MCF 10A (cell line): ENCODE measurements at regions of chr9 and their contacts with region 1.

Region 1: GRCh38 chr9:20622330-20623020 is at the start of gene MLLT3:
- DNase-seq: peak; percentile 90
- H3K4me3 Mint-ChIP-seq: peak within 1 kb of the TSS; percentile 81
- H3K27ac Mint-ChIP-seq: peak within 1 kb of the TSS; percentile 42
- H3K4me1 Mint-ChIP-seq: peaks cover 20% of the 10 kb centered on the region
- H3K27me3 Mint-ChIP-seq: peaks cover 50% of the 10 kb centered on the region
- CTCF ChIP-seq: no peak
- total RNA-seq, gene MLLT3: 0.66 and 1.2 TPM in 2 replicates

Region 2: GRCh38 chr9:19946441-19947109 is 675.9 kb before region 1 on chr9:
- CTCF ChIA-PET with region 1: no interaction called
- POLR2A ChIA-PET with region 1: no interaction called
- intact Hi-C with region 1: loop called (anchors 5 kb)
- DNase-seq: peak; percentile 11
- H3K4me3 Mint-ChIP-seq: no peak overlapping the region
- H3K27ac Mint-ChIP-seq: no peak overlapping the region
- H3K4me1 Mint-ChIP-seq: no peaks in the 10 kb centered on the region
- H3K27me3 Mint-ChIP-seq: peaks cover 16% of the 10 kb centered on the region
- CTCF ChIP-seq: peak; percentile 28

Region 3: GRCh38 chr9:20220286-20220685 is 402.2 kb before region 1 on chr9:
- CTCF ChIA-PET with region 1: no interaction called
- POLR2A ChIA-PET with region 1: no interaction called
- intact Hi-C with region 1: no loop called
- DNase-seq: peak; percentile 28
- H3K4me3 Mint-ChIP-seq: no peak overlapping the region
- H3K27ac Mint-ChIP-seq: peak overlapping the region; percentile 13
- H3K4me1 Mint-ChIP-seq: peaks cover 26% of the 10 kb centered on the region
- H3K27me3 Mint-ChIP-seq: no peaks in the 10 kb centered on the region
- CTCF ChIP-seq: no peak

Region 4: DNA sequence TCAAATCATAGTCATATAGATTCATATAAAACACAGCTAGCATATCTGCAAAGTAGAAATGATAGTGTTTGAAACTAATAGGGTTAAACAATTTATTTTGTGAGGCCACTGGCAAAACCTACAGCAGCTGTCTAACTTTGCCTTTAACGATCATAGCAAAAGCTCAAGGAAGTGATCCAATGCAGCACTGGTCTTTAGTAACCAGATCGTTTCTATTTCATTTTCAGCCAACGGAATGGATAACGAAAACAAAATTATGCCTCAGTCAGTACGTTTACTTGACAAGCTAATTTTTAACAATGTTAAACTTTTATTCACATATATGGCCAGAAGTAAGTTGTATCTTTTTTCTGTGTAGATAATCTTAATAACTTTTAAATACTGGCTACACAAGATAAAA is 17.9 kb before region 1 on chr9:
- CTCF ChIA-PET with region 1: interaction called, 10 read pairs
- POLR2A ChIA-PET with region 1: interaction called, 3 read pairs
- intact Hi-C with region 1: no loop called
- DNase-seq: no peak
- H3K4me3 Mint-ChIP-seq: no peak overlapping the region
- H3K27ac Mint-ChIP-seq: no peak overlapping the region
- H3K4me1 Mint-ChIP-seq: no peaks in the 10 kb centered on the region
- H3K27me3 Mint-ChIP-seq: peaks cover 58% of the 10 kb centered on the region
- CTCF ChIP-seq: no peak

Region 5: DNA sequence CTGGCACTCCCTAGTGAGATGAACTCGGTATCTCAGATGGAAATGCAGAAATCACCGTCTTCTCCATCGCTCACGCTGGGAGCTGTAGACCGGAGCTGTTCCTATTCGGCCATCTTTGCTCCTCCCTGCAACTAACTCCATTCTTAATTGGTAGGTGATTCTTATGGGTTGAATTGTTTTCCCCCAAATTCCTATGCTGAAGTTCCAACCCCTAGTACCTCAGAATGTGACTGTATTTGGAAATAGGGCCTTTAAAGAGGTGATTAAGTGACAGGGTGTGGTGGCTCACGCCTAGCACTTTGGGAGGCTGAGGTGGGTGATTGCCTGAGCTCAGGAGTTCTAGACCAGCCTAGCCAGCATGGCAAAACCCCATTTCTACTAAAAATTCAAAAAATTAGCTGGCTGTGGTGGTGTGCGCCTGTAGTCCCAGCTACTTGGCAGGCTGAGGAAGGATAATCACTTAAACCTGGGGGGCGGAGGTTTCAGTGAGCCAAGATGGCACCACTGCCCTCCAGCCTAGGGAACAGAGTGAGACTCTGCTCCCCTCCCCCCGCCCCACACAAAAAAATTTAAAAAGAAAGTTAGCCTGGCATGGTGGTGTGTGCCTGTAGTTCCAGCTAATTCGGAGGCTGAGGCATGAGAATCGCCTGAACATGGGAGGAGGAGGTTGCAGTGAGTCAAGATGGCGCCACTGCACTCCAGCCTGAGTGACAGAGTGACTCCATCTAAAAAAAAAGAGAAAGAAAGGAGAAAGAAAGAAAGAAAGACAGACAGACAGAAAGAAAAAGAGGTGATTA is 36.4 kb after region 1 on chr9:
- CTCF ChIA-PET with region 1: interaction called, 10 read pairs
- POLR2A ChIA-PET with region 1: interaction called, 3 read pairs
- intact Hi-C with region 1: no loop called
- DNase-seq: peak; percentile 16
- H3K4me3 Mint-ChIP-seq: no peak overlapping the region
- H3K27ac Mint-ChIP-seq: peak overlapping the region; percentile 52
- H3K4me1 Mint-ChIP-seq: no peaks in the 10 kb centered on the region
- H3K27me3 Mint-ChIP-seq: peaks cover 30% of the 10 kb centered on the region
- CTCF ChIP-seq: no peak

Region 6: DNA sequence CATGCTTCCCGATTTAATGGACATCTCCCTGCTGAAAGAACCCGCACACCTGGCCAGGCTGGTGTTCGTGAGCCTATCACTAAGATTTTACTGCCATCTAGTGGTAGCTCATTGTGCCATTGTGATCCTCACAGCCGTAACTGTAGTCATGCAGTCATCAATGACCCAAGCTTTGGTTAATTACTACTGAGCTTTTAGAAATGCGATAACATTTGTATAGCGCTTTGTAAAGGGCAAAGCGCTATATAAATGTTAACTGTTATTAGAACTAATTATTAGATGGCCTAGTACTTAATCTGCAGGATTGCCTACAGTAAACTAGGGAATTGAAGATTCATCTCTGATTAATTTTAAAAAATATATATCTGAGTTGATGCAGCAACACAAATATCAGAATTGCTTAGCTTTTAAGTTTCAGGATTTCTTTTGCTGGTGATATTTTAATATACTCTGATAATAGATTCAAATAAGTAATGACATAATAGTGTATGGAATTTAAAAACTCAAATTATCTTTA is 318.8 kb after region 1 on chr9:
- CTCF ChIA-PET with region 1: interaction called, 28 read pairs
- POLR2A ChIA-PET with region 1: interaction called, 8 read pairs
- intact Hi-C with region 1: loop called (anchors 1 kb)
- DNase-seq: peak; percentile 61
- H3K4me3 Mint-ChIP-seq: no peak overlapping the region
- H3K27ac Mint-ChIP-seq: no peak overlapping the region
- H3K4me1 Mint-ChIP-seq: no peaks in the 10 kb centered on the region
- H3K27me3 Mint-ChIP-seq: no peaks in the 10 kb centered on the region
- CTCF ChIP-seq: peak; percentile 53